ENCODE measurements at regions of chr18 and their contacts with region 1.

Region 1: GRCh38 chr18:55781481-55781957 is 193.5 kb upstream of the TCF4 start:
- DNase-seq: peak in 9 of 10 donors; percentile 35 to 94 (median 64)

Region 2: GRCh38 chr18:55343396-55344073 is 438.0 kb before region 1 on chr18:
- intact Hi-C with region 1: loop called (anchors 5 kb)
- DNase-seq: no peak

Region 3: DNA sequence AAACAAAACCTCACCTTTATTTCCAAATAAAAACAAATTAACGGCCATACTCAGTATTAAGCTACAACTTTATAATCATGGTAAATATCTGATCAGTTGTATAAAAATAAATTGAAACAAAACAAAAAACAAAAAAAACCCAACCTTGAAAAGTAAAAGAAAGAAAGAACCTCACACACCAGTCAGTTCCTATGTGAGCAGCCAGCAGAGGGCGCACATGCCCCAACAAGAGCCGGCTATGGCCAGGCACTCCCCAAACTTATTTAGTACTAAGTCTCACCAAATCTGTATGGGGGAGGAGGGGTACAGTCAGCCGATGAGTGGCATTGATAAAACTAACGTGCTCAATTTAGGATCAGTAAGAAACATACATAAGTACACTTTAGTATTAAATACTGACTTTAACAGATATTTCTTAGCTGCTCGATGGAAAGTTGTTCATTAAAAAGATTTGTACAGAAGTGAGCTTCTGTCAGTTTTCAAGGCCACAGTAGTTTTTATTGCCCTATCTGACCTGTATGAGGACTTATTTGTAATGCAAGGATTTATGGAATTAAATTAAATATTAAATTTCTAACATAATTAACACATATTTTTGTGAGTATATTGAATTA is 366.2 kb before region 1 on chr18:
- intact Hi-C with region 1: loop called (anchors 2 kb)
- DNase-seq: peak; percentile 74 to 98 (median 90)

Region 4: GRCh38 chr18:55794288-55795052 is 13.0 kb after region 1 on chr18:
- intact Hi-C with region 1: no loop called
- DNase-seq: no peak

Region 5: GRCh38 chr18:55856229-55856628 is 74.7 kb after region 1 on chr18:
- intact Hi-C with region 1: loop called (anchors 5 kb)
- DNase-seq: no peak

Region 6: GRCh38 chr18:57497372-57498294 is 1716.1 kb after region 1 on chr18:
- intact Hi-C with region 1: no loop called
- DNase-seq: no peak